ENCODE measurements at regions of chr12 and their contacts with region 1.

Region 1: DNA sequence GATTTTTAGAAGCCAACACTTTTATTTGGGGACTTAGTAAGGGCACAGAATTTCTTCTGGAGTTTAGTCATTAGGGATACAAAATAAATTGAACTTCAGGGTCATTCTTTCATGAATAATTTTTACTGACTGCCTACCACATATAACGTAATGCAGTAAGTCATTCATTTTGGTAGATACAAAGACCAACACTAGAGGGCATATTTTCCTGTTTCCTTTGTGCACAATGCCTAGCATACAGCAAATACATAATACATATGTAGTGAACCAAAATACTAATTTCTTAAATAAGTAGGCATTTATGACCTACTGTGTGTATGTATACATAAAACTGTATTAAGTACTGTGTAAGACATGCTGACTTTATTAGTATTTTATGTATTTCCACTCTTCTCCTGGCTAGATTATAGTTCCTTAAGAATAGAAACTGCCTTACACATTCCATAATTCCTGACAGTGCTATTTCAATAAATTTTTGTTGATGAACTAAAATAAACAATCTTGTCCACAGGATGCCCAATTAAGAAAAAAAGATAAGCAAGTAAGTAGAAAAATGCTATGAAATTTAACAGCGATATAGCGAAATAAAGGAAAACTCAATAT is 47.9 kb downstream of the PPP1R12A start:
- H3K4me3 Mint-ChIP-seq: no peak overlapping the region
- H3K27ac Mint-ChIP-seq: no peak overlapping the region
- H3K4me1 Mint-ChIP-seq: peaks cover 55% of the 10 kb centered on the region
- H3K27me3 Mint-ChIP-seq: no peaks in the 10 kb centered on the region

Region 2: GRCh38 chr12:79873201-79873600 is 13.8 kb before region 1 on chr12:
- intact Hi-C with region 1: loop called (anchors 2 kb)
- H3K4me3 Mint-ChIP-seq: no peak overlapping the region
- H3K27ac Mint-ChIP-seq: no peak overlapping the region
- H3K4me1 Mint-ChIP-seq: peaks cover 48% of the 10 kb centered on the region
- H3K27me3 Mint-ChIP-seq: no peaks in the 10 kb centered on the region

Region 3: DNA sequence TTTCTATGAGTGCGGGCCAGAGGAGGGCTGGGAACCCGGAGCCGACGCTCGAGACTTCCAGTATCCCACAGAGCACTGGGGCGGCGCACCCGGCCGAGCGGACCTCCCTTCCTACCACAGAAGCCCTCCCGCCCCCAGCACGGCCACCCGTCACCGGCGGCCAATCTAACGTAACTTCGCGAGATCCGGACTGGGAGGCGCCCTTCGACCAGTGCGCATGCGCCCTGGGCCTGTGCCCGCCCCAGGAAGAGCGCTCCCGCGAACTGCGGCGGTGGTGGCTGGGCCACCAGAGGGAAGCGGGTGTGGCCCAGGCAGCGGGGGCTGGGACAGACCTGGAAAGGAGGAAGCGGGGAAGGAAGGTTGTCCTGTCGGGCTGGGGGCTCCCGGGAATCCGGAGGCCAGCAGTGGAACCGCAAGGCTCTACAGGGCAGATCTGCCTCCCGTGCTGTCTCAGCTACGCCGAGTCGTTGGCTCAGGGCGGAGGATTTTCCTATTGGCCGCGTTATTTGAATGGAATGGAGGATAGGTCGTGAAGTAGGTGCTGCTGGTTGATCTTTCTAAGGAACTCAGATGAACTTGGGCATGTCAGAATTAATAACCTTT is 48.1 kb after region 1 on chr12 and contains the start of gene PPP1R12A:
- intact Hi-C with region 1: loop called (anchors 2 kb)
- H3K4me3 Mint-ChIP-seq: peak within 1 kb of the TSS; percentile 98
- H3K27ac Mint-ChIP-seq: peak within 1 kb of the TSS; percentile 96
- H3K4me1 Mint-ChIP-seq: peaks cover 28% of the 10 kb centered on the region
- H3K27me3 Mint-ChIP-seq: no peaks in the 10 kb centered on the region

Region 4: GRCh38 chr12:80087486-80088213 is 200.6 kb after region 1 on chr12:
- intact Hi-C with region 1: no loop called
- H3K4me3 Mint-ChIP-seq: no peak overlapping the region
- H3K27ac Mint-ChIP-seq: no peak overlapping the region
- H3K4me1 Mint-ChIP-seq: no peaks in the 10 kb centered on the region
- H3K27me3 Mint-ChIP-seq: no peaks in the 10 kb centered on the region

Measured in dendritic cell treated with granulocyte-macrophage colony-stimulating factor and Interleukin-4, amounts not matched to agents 40 ng/mL and 50 ng/mL, for 4 days (primary cell).